AG04449 (cell line): ENCODE measurements at regions of chr1 and their contacts with region 1.

Region 1: DNA sequence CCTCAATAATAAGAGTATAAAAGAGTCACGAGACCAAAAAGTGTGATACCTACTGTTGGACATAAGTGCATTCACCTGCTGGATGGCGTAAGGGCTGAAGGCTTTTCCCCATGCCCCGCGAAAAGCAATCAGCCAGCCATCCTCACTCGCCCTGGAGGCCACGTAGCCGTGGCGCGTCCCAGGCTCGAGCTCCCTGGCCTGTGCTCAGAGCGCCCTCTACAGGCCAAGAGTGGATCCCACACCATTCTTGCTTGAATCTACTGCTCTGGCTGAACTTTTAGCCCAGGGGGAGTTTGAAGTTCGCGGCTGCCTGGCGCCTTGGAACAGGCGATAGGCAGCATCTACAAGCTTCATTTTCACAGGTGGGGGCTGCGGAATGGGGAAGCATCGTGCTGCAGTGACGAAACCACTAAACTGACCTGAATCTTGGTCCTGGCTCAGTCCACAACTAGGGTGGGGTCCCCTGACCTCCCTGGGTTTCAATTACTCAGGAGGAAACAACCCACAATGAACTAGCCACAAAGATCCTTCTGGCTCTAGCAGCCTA is 70.3 kb upstream of the SERBP1 start:
- DNase-seq: no peak
- H3K4me3 ChIP-seq: no peak overlapping the region
- CTCF ChIP-seq: peak; percentile 99

Region 2: GRCh38 chr1:67239738-67240137 is 260.7 kb before region 1 on chr1:
- CTCF ChIA-PET with region 1: interaction called, 88 read pairs
- POLR2A ChIA-PET with region 1: no interaction called
- DNase-seq: no peak
- H3K4me3 ChIP-seq: no peak overlapping the region
- CTCF ChIP-seq: no peak

Region 3: GRCh38 chr1:67347688-67348472 is 152.6 kb before region 1 on chr1:
- CTCF ChIA-PET with region 1: interaction called, 244 read pairs
- POLR2A ChIA-PET with region 1: interaction called, 3 read pairs
- DNase-seq: no peak
- H3K4me3 ChIP-seq: peak overlapping the region; percentile 27
- CTCF ChIP-seq: peak; percentile 71

Region 4: DNA sequence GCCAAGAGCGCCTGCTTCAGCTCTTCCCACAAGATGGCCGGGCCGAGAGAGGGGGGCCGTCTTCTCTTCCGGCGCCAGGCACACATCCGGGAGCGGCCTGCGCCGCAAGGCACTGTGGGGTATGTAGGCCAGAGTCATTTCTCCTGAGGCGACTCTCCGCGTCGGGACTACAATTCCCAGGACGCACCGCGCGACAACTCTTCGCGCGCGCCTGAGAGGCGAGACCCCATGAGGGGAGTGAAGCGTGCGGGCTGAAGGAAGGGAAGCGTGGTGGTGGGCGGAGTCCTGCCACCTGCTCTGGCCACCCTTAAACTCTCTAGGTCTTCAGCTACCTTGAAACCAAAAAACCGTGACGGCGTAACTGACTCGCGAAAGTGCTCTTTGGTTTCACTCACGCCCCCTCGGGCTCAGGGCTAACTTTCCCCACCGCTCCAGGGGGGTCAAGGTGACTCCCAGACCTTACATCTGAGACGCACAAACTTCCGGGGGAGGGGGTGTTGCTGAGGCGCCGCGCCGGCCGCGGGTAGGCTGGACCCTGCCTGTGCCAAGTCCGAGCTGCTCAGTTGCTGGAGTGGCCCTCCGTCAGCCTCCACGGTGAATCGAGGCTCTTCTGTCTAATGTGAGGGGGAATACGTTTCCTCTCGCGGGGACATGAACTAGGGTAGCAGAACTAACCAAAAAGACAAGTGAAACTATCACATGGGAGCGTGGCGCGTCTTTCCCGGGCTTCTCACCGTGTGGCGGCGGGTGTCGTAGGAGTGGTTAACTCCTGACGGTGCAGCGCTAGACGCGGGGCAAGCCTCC is 69.9 kb before region 1 on chr1 and contains the start of gene SERBP1:
- CTCF ChIA-PET with region 1: interaction called, 16 read pairs
- POLR2A ChIA-PET with region 1: no interaction called
- DNase-seq: peak; percentile 70
- H3K4me3 ChIP-seq: peak within 1 kb of the TSS; percentile 91
- CTCF ChIP-seq: no peak

Region 5: DNA sequence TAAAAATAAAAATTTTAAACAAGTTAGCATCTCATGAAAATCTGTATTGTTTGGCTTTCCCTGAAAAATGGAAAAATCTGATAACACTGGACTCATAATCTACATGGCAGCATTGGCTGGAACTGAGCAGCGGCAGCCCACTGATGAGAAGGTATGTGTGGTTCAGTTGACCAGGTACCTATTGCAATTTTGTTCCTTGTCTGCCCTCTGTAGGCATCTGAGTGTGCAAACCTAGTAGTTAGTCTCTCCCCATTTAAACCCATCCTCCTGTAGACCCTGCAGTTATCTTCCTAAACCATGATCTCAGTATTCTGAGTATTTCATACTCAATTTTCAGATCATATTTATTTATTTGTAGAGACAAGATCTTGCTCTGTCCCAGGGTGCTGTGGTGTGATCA is 10.8 kb before region 1 on chr1:
- CTCF ChIA-PET with region 1: interaction called, 96 read pairs
- POLR2A ChIA-PET with region 1: no interaction called
- DNase-seq: no peak
- H3K4me3 ChIP-seq: no peak overlapping the region
- CTCF ChIP-seq: no peak